MCF 10A (cell line): ENCODE measurements at regions of chr10 and their contacts with region 1.

Region 1: GRCh38 chr10:70169649-70170364 is 507 bp downstream of the SAR1A start:
- DNase-seq: no peak
- H3K4me3 Mint-ChIP-seq: peak overlapping the region; percentile 90
- H3K27ac Mint-ChIP-seq: peak overlapping the region; percentile 98
- H3K4me1 Mint-ChIP-seq: peaks cover 30% of the 10 kb centered on the region
- H3K27me3 Mint-ChIP-seq: no peaks in the 10 kb centered on the region
- CTCF ChIP-seq: no peak

Region 2: DNA sequence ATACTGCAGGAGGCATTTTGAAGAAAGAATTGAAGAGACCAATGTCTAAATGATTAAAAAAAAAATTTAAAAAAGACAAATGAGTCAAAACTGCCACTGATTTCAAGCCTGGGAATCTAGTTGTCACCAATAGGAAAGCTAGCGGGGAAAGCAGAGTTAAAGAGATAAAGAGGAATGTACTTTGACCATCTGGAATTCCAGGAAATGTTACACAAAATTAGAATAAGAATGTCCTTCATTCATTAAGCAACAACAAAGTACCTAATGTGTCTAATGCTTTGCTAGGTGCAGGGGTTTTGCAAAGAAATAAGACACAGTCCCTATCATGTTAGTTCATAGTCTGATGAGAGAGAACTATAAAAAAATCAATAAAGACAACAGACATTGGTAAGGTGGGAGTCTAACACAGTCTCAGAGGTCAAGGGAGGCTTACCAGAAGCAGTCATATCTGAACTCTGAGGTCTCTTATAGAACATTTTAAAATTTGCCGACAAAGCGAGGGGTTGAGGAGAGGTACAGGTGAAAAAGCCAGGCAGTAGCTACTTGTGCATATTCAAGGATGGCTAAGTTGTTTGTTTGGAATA is 14.5 kb before region 1 on chr10:
- CTCF ChIA-PET with region 1: interaction called, 4 read pairs
- POLR2A ChIA-PET with region 1: interaction called, 21 read pairs
- intact Hi-C with region 1: no loop called
- DNase-seq: no peak
- H3K4me3 Mint-ChIP-seq: no peak overlapping the region
- H3K27ac Mint-ChIP-seq: peak overlapping the region; percentile 28
- H3K4me1 Mint-ChIP-seq: peaks cover 5% of the 10 kb centered on the region
- H3K27me3 Mint-ChIP-seq: no peaks in the 10 kb centered on the region
- CTCF ChIP-seq: no peak

Region 3: DNA sequence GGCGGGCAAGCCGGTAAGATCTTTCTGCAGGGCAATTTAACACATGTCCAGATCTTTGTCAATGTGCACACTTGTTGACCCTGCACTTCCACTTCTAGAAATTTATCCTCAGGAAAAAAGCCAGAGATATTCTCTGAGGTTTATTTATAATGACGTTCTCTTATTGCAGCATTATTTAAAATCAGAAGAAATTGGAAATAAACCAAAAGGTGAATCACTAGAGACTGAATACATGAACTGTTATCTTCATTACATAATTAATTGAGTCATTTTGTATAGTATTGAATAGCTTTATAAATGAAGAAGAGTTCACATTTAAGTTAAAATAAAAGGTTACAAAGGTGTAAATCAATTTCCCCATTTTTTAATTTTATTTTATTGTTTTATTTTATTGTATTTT is 16.8 kb after region 1 on chr10:
- CTCF ChIA-PET with region 1: interaction called, 3 read pairs
- POLR2A ChIA-PET with region 1: interaction called, 153 read pairs
- intact Hi-C with region 1: no loop called
- DNase-seq: peak; percentile 62
- H3K4me3 Mint-ChIP-seq: peak overlapping the region; percentile 17
- H3K27ac Mint-ChIP-seq: peak overlapping the region; percentile 73
- H3K4me1 Mint-ChIP-seq: peaks cover 22% of the 10 kb centered on the region
- H3K27me3 Mint-ChIP-seq: peaks cover 16% of the 10 kb centered on the region
- CTCF ChIP-seq: no peak

Region 4: GRCh38 chr10:70191972-70192305 is 22.1 kb after region 1 on chr10:
- CTCF ChIA-PET with region 1: interaction called, 6 read pairs
- POLR2A ChIA-PET with region 1: interaction called, 153 read pairs
- intact Hi-C with region 1: no loop called
- DNase-seq: peak; percentile 86
- H3K4me3 Mint-ChIP-seq: peak overlapping the region; percentile 16
- H3K27ac Mint-ChIP-seq: peak overlapping the region; percentile 73
- H3K4me1 Mint-ChIP-seq: peaks cover 41% of the 10 kb centered on the region
- H3K27me3 Mint-ChIP-seq: no peaks in the 10 kb centered on the region
- CTCF ChIP-seq: no peak